ENCODE measurements at regions of chr12 and their contacts with region 1.

Region 1: DNA sequence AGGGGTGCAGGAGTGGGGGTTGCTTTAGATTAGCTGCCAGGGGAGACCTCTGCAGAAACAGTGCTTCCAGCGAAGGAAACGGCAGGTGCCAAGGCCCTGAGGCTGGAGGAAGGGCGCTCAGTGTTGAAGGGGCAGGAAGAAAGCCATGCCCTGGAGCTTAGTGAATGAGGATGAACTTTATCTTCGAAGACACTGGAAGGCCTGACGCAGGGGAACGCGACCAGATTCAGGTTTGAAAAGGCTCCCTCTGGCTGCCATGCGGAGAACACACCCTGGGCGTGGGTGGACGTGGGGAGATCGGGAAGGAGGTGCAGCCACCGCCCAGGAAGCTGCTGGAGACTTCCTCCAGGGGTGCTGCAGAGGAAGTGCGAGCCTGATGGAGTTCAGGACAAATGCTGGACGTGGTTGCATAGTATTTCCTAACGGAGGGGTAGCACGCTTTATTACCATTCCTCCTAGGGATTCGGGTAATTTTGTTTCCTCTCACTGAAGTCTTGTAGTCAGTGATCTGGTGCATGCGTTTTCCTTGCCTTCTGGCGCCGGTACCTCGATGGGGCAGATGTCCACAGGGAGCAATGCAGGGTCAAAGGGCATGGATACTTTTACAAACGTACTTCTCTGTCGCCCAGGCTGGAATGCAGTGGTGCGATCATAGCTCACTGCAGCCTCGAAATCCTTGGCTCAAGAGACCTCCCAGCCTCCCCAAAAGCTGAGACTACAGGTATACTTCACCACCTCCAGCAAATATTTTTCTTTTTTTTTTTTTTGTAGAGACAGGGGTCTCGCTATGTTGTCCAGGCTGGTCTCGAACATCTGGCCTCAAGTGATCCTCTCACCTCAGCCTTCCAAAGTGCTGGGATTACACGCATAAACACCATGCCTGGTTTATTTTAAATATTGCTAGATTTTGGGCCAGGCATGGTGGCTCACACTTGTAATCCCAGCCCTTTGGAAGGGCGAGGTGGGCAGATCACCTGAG is 26.4 kb upstream of the UBC start:
- DNase-seq: peak; percentile 86
- ATAC-seq: peak; percentile 53
- H3K4me3 ChIP-seq: peak overlapping the region; percentile 45 to 52
- H3K27ac ChIP-seq: peak overlapping the region; percentile 91
- H3K4me1 ChIP-seq: peaks cover 35 to 60% of the 10 kb centered on the region in 2 experiments
- H3K27me3 ChIP-seq: no peaks in the 10 kb centered on the region
- CTCF ChIP-seq: peak in 2 of 3 experiments; percentile 92 to 93; a peak in 4 of 6 replicates
- POLR2A ChIP-seq: no peak
- RAD21 ChIP-seq: no peak

Region 2: GRCh38 chr12:124906606-124907261 is 34.1 kb before region 1 on chr12:
- CTCF ChIA-PET with region 1: interaction called, 27 read pairs
- POLR2A ChIA-PET with region 1: interaction called, 15 read pairs
- RAD21 ChIA-PET with region 1: interaction called, 4 to 6 read pairs
- intact Hi-C with region 1: loop called (anchors 2 kb)
- DNase-seq: peak; percentile 94
- ATAC-seq: peak; percentile 55
- H3K4me3 ChIP-seq: no peak overlapping the region
- H3K27ac ChIP-seq: peak overlapping the region; percentile 26; the same call in 1 of the 2 replicates
- H3K4me1 ChIP-seq: peaks cover 38 to 55% of the 10 kb centered on the region in 2 experiments
- H3K27me3 ChIP-seq: no peaks in the 10 kb centered on the region
- CTCF ChIP-seq: peak in 2 of 3 experiments; percentile 95 to 99; a peak in 4 of 6 replicates
- POLR2A ChIP-seq: no peak
- RAD21 ChIP-seq: no peak

Region 3: GRCh38 chr12:124927201-124928094 is 13.4 kb before region 1 on chr12:
- CTCF ChIA-PET with region 1: interaction called, 32 read pairs
- POLR2A ChIA-PET with region 1: interaction called, 34 read pairs
- RAD21 ChIA-PET with region 1: no interaction called
- intact Hi-C with region 1: loop called (anchors 1 kb)
- DNase-seq: peak; percentile 84
- ATAC-seq: peak; percentile 67
- H3K4me3 ChIP-seq: peak overlapping the region; percentile 16 to 40
- H3K27ac ChIP-seq: peak overlapping the region; percentile 65
- H3K4me1 ChIP-seq: peaks cover 31 to 69% of the 10 kb centered on the region in 2 experiments
- H3K27me3 ChIP-seq: no peaks in the 10 kb centered on the region
- CTCF ChIP-seq: no peak
- POLR2A ChIP-seq: no peak
- RAD21 ChIP-seq: no peak

Region 4: GRCh38 chr12:124992874-124993625 is 52.2 kb after region 1 on chr12:
- CTCF ChIA-PET with region 1: interaction called, 3 read pairs
- POLR2A ChIA-PET with region 1: no interaction called
- RAD21 ChIA-PET with region 1: no interaction called
- intact Hi-C with region 1: loop called (anchors 2 kb)
- DNase-seq: peak; percentile 91
- ATAC-seq: peak; percentile 50
- H3K4me3 ChIP-seq: peak overlapping the region; percentile 42 to 61
- H3K27ac ChIP-seq: peak overlapping the region; percentile 74
- H3K4me1 ChIP-seq: peaks cover 10 to 34% of the 10 kb centered on the region in 2 experiments; a peak in 3 of 4 replicates
- H3K27me3 ChIP-seq: no peaks in the 10 kb centered on the region
- CTCF ChIP-seq: peak in 2 of 3 experiments; percentile 54 to 56; a peak in 4 of 6 replicates
- POLR2A ChIP-seq: no peak
- RAD21 ChIP-seq: no peak

Measured in HCT116 (cell line).